ENCODE measurements at regions of chr6 and their contacts with region 1.

Region 1: GRCh38 chr6:149834513-149835481 is 29.4 kb downstream of the LRP11 start:
- DNase-seq: no peak
- ATAC-seq: no peak

Region 2: GRCh38 chr6:149863697-149864577 is 29.1 kb after region 1 on chr6 and contains the start of gene LRP11:
- intact Hi-C with region 1: loop called (anchors 2 kb)
- DNase-seq: peak; percentile 92
- ATAC-seq: peak; percentile 92
- total RNA-seq, gene LRP11: 21.5 TPM

Region 3: DNA sequence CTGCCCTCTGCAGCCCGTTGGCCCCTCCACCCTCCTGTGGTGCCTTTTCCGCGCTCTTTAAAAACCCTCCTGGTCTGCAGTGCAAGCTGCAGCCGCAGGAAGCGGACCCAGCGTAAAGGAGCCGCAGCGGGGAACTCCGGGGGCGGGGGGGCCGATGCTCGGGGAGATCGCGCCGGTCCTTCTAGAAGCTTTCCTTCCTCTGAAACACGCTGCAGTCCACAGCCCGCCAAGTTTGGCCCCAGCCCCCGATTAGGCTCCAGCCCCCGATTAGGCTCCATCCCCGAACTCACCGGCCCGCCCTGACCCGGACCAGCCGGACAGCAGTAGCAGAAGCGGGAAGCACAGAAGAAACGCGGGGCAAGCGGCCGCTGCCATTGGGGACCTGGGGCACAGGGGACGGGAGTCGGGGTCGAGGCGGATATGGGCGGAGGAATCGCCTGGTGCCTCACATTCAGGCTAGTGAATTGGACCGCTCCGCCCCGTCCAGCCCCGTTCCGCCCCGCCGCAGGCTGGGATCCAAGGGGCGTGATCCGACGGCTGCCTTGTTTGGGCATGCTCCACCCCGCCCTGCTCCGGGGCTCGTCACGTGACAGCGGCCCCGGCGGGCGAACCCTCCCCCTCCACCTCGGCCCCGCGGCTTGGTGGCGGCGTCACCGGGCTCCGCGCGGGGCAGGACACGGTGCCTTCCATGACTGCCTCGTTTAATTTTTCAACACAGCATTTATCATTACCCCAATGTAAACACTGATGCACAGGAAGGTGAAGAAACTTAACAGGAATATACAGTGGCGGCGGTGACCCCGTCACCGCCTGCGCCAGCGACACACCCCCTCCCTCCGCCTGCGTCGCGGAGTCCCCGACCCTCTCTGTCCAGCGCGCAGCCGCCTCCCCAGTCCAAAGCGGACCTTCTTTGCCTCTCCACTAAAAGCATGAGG is 170.3 kb after region 1 on chr6:
- intact Hi-C with region 1: loop called (anchors 10 kb)
- DNase-seq: peak; percentile 94
- ATAC-seq: peak; percentile 99

Measured in Right ventricle myocardium inferior (tissue), 1 donor.